CD8-positive, alpha-beta memory T cell (primary cell): ENCODE measurements at regions of chr6 and their contacts with region 1.

Region 1: DNA sequence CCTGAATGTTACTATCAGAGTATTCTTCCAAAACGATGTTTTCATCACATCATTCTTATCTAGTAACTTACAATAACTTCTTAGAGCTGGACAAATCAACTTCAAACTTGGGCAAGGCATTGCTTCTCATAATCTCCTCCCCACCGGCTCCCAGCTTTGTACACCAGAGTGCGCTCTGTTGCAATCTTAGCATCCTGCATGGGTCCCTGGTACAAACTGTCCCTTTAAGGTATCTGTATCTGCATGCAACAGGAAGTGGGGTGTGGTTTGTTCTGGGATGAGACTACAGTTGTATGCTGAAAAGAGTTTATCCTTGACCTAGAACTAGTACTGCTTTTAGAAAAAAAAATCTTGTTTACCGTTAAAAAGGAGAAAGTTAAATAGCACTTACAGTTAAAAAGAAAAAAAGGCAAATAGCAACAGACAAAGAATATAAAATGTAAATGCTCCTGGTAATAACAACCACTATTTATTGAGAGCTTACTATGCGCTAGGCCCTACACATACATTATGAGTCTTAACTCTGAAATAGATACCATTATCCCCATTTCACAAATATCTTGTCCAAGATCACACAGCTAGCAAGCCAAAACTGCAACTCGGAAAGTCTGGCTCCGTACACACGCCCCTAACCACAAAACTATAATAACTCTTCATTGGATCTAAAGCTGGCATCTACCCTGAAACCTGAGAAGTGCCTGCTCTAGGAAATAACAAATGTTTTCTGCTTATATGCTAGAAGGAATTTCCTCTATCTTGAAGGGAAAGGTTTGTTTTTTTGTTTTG is 9.8 kb upstream of the HECA start:
- DNase-seq: peak; percentile 48 to 88 (median 83)
- H3K4me3 ChIP-seq: peak overlapping the region; percentile 35
- H3K4me3 Mint-ChIP-seq: peak overlapping the region; percentile 42 to 80 (median 67)
- H3K27ac ChIP-seq: peak overlapping the region; percentile 10
- H3K27ac Mint-ChIP-seq: peak overlapping the region; percentile 83 to 97 (median 92)
- H3K4me1 ChIP-seq: peaks cover 49% of the 10 kb centered on the region
- H3K4me1 Mint-ChIP-seq: peaks cover 40 to 54% (median 49%) of the 10 kb centered on the region in 3 donors
- H3K27me3 ChIP-seq: no peaks in the 10 kb centered on the region
- H3K27me3 Mint-ChIP-seq: no peaks in the 10 kb centered on the region

Region 2: DNA sequence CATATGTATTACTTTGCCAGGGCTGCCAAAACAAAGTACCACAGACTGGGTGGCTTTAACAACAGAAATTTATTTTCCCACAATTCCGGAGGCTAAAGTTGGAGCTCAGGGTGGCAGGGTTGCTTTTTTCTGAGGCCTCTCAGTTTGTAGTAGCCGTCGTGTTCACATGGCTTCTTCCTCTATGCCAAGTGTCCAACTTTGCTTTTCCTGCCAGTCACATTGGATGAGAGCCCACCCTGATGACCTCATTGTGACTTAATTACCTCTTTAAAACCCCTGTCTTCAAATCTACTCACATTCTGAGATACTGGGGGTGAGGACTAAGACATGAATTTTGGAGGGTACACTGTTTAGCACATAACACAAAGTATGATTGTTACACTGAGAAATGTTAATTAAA is 339.1 kb before region 1 on chr6:
- CTCF ChIA-PET with region 1: no interaction called
- POLR2A ChIA-PET with region 1: no interaction called
- DNase-seq: no peak
- H3K4me3 ChIP-seq: no peak overlapping the region
- H3K4me3 Mint-ChIP-seq: no peak overlapping the region
- H3K27ac ChIP-seq: no peak overlapping the region
- H3K27ac Mint-ChIP-seq: no peak overlapping the region
- H3K4me1 ChIP-seq: no peaks in the 10 kb centered on the region
- H3K4me1 Mint-ChIP-seq: peaks cover 7 to 12% (median 12%) of the 10 kb centered on the region in 3 donors
- H3K27me3 ChIP-seq: no peaks in the 10 kb centered on the region
- H3K27me3 Mint-ChIP-seq: peaks cover 0 to 1% of the 10 kb centered on the region in 2 donors

Region 3: DNA sequence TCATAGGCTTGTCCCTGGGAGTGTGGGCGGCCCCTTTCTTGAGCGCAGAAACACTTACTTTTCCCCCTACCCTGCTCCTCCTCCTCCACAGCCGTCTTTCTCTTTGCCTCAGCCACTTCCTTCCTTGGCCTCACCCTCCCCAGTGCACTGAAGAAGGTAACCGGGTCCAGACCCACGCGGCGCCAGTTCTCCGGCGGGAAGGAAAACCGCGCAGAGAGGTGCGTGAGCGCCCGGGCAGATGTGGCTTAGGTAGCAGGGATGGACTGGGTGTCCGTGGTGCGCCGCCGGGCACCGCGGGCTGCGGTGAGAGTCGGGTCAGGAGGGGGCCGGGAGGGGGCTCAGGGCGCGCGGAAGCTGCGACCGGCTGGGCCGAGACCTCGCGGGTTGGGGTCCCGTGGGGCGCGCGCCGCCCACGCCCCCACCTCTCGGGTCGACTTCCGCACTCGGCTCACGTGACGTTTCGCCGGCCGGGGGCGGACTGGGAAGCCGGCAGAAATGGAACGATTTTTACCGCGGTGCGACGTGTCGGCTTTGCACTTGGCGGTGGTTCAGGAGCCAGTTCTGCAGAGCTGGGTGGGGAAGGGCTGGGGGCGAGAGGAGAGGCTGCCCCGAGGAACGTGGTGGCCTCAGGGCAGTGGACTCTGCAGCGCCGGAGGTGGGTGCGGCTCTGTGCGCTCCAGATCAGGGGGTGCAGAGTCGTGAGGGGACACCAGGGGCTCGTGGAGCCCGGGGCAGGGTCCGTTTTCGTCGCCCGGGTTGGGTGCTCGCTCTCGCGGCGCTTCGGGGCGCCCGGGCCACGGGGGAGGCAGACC is 96.2 kb before region 1 on chr6 and contains the start of gene ABRACL:
- CTCF ChIA-PET with region 1: interaction called, 10 read pairs
- POLR2A ChIA-PET with region 1: interaction called, 5 read pairs
- DNase-seq: peak; percentile 49 to 82 (median 64)
- H3K4me3 ChIP-seq: peak within 1 kb of the TSS; percentile 70
- H3K4me3 Mint-ChIP-seq: peak within 1 kb of the TSS in 2 of 7 donors; percentile 94 to 98
- H3K27ac ChIP-seq: peak within 1 kb of the TSS; percentile 71
- H3K27ac Mint-ChIP-seq: peak within 1 kb of the TSS; percentile 56 to 99 (median 90)
- H3K4me1 ChIP-seq: peaks cover 20% of the 10 kb centered on the region
- H3K4me1 Mint-ChIP-seq: peaks cover 31 to 32% (median 32%) of the 10 kb centered on the region in 3 donors
- H3K27me3 ChIP-seq: no peaks in the 10 kb centered on the region
- H3K27me3 Mint-ChIP-seq: no peaks in the 10 kb centered on the region
- total RNA-seq, gene ABRACL: 141 to 145 TPM

Region 4: GRCh38 chr6:139109558-139109957 is 15.5 kb before region 1 on chr6:
- CTCF ChIA-PET with region 1: interaction called, 20 read pairs
- POLR2A ChIA-PET with region 1: interaction called, 4 read pairs
- DNase-seq: peak in 1 of 5 donors; percentile 48
- H3K4me3 ChIP-seq: no peak overlapping the region
- H3K4me3 Mint-ChIP-seq: peak overlapping the region in 1 of 7 donors; percentile 40
- H3K27ac ChIP-seq: no peak overlapping the region
- H3K27ac Mint-ChIP-seq: peak overlapping the region in 6 of 8 donors; percentile 15 to 57 (median 32)
- H3K4me1 ChIP-seq: peaks cover 47% of the 10 kb centered on the region
- H3K4me1 Mint-ChIP-seq: peaks cover 49 to 59% (median 58%) of the 10 kb centered on the region in 3 donors
- H3K27me3 ChIP-seq: no peaks in the 10 kb centered on the region
- H3K27me3 Mint-ChIP-seq: peaks cover 0 to 3% of the 10 kb centered on the region in 2 donors

Region 5: GRCh38 chr6:139369568-139370282 is 244.6 kb after region 1 on chr6:
- CTCF ChIA-PET with region 1: interaction called, 22 read pairs
- POLR2A ChIA-PET with region 1: interaction called, 9 read pairs
- DNase-seq: peak in 2 of 5 donors; percentile 46 to 47
- H3K4me3 ChIP-seq: peak overlapping the region; percentile 23
- H3K4me3 Mint-ChIP-seq: peak overlapping the region; percentile 54 to 100 (median 84)
- H3K27ac ChIP-seq: no peak overlapping the region
- H3K27ac Mint-ChIP-seq: peak overlapping the region; percentile 65 to 100 (median 90)
- H3K4me1 ChIP-seq: peaks cover 38% of the 10 kb centered on the region
- H3K4me1 Mint-ChIP-seq: peaks cover 30 to 53% (median 42%) of the 10 kb centered on the region in 3 donors
- H3K27me3 ChIP-seq: no peaks in the 10 kb centered on the region
- H3K27me3 Mint-ChIP-seq: peaks cover 0 to 4% of the 10 kb centered on the region in 2 donors

Region 6: GRCh38 chr6:139448051-139448649 is 323.1 kb after region 1 on chr6:
- CTCF ChIA-PET with region 1: no interaction called
- POLR2A ChIA-PET with region 1: no interaction called
- DNase-seq: no peak
- H3K4me3 ChIP-seq: no peak overlapping the region
- H3K4me3 Mint-ChIP-seq: no peak overlapping the region
- H3K27ac ChIP-seq: peak overlapping the region; percentile 63
- H3K27ac Mint-ChIP-seq: no peak overlapping the region
- H3K4me1 ChIP-seq: no peaks in the 10 kb centered on the region
- H3K4me1 Mint-ChIP-seq: peaks cover 0 to 6% (median 0%) of the 10 kb centered on the region in 3 donors
- H3K27me3 ChIP-seq: no peaks in the 10 kb centered on the region
- H3K27me3 Mint-ChIP-seq: no peaks in the 10 kb centered on the region